KBM-7 (cell line): ENCODE measurements at regions of chr1 and their contacts with region 1.

Region 1: GRCh38 chr1:244012202-244012601 is 38.9 kb upstream of the ZBTB18 start:
- DNase-seq: no peak

Region 2: DNA sequence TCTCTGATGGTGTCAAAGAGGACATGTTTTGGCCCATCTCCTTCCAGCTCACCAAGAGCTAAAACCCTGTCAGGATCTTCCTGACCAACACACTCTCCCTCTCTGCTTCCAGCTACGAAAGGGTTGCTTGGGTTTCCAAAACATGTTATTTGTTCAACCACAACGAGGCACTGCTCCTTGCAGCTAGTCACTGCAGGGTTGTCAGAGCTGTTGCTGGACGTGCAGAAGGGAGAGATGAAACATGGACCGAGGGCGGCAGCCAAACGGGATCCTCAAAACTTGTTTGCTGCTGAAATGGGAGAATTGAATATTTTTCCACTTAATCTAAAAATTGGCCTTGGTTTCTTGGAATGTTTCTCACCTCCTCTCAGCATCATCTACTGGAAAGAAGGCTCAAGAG is 51.3 kb after region 1 on chr1:
- in situ Hi-C with region 1: no loop called
- DNase-seq: no peak

Region 3: GRCh38 chr1:244074559-244075171 is 62.5 kb after region 1 on chr1:
- in situ Hi-C with region 1: no loop called
- DNase-seq: no peak

Region 4: GRCh38 chr1:244272471-244273261 is 260.5 kb after region 1 on chr1:
- in situ Hi-C with region 1: loop called (anchors 25 kb)
- DNase-seq: peak; percentile 88